GM13977 (cell line): ENCODE measurements at regions of chr11 and their contacts with region 1.

Region 1: GRCh38 chr11:68903288-68904247 is at the starts of genes IGHMBP2 and MRPL21:
- DNase-seq: peak; percentile 96
- CTCF ChIP-seq: no peak

Region 2: DNA sequence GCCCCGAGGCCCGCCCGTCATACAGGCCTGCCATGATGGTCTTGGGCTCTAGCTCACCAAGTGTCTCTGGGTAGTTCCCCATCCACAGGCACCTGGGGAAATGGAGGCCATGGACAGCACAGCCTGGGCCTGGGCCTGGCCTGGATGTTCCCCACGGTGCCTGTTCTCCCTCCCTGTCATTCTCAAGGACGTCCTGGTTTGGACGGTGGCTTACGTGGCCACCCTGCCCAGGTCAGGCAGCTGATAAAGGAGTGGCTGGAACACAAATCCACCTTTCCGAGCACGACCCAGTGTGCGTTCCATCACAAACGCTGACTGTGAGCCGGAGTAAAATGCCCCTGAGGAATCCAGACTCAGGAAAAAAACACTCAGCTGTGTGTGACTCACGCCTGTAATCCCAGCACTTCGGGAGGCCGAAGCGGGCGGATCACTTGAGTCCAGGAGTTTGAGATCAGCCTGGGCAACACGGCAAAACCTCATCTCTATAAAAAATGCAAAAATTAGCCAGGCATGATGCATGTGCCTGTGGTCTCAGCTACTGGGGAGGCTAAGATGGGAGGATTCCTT is 111.1 kb before region 1 on chr11:
- in situ Hi-C with region 1: no loop called
- DNase-seq: no peak
- CTCF ChIP-seq: no peak

Region 3: GRCh38 chr11:69670158-69670845 is 766.7 kb after region 1 on chr11:
- in situ Hi-C with region 1: loop called (anchors 25 kb)
- DNase-seq: peak; percentile 87
- CTCF ChIP-seq: peak; percentile 91